PC-3 (cell line): ENCODE measurements at regions of chr7 and their contacts with region 1.

Region 1: GRCh38 chr7:121337398-121337797 is 8.6 kb downstream of the WNT16 start:
- DNase-seq: peak; percentile 56
- ATAC-seq: peak; percentile 93
- H3K4me3 ChIP-seq: no peak overlapping the region
- H3K27ac ChIP-seq: no peak overlapping the region
- H3K4me1 ChIP-seq: no peaks in the 10 kb centered on the region
- H3K27me3 ChIP-seq: peaks cover 39% of the 10 kb centered on the region
- CTCF ChIP-seq: peak; percentile 65

Region 2: DNA sequence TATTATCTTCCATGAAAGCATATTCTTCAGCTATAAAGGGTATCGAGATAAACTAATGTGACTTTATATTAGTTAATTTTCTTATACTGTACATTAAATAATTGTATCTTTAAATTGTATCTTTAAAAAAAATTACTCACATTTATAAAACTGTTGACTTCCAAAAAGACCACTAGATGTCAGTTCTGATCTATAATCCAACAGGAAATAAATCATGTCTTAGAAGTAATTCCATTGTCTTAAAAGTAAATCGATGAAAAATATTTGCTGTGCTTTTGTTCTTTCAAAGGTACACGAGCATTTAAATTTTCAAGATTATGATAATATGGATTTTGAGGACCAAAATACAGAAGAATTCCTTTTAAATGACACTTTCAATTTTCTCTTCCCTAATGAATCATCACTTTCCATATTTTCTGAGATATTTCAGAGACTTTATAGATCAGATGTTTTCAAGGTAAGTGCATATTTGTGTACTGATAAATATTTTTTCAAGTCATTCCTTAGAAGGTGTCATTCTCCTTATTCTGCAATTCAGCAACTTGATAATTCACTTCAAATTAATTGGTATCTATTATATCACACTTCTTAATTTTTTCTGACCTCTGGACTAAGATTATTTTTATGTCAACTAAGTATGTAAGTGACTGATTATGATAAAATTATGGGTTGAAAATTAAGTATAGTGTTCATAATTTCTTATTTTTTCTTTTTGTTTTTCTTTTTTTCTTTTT is 210.4 kb before region 1 on chr7:
- CTCF ChIA-PET with region 1: interaction called, 3 read pairs
- POLR2A ChIA-PET with region 1: no interaction called
- intact Hi-C with region 1: loop called (anchors 1 kb)
- DNase-seq: peak; percentile 32
- ATAC-seq: no peak
- H3K4me3 ChIP-seq: no peak overlapping the region
- H3K27ac ChIP-seq: no peak overlapping the region
- H3K4me1 ChIP-seq: no peaks in the 10 kb centered on the region
- H3K27me3 ChIP-seq: no peaks in the 10 kb centered on the region
- CTCF ChIP-seq: peak; percentile 57

Region 3: DNA sequence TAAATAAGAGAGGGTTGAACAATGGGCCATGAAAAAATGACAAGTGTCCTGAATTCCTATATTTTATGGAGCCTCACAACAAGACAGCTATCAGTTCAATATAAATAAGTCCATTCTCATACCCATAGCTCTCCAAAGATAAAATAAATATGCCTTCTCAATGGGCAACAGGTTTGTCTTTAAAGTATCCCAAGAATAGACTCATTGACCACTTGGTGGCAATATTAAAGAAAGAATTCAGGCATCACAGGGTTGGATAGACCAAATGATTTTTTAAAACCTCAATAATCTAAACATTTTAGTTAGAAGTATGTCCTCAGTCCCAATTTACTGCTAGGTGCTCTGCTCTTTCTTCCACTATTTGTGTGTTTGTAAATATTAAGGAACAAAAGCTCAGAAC is 173.7 kb before region 1 on chr7:
- CTCF ChIA-PET with region 1: no interaction called
- POLR2A ChIA-PET with region 1: no interaction called
- intact Hi-C with region 1: loop called (anchors 1 kb)
- DNase-seq: no peak
- ATAC-seq: peak; percentile 48; the same call in 1 of the 2 replicates
- H3K4me3 ChIP-seq: no peak overlapping the region
- H3K27ac ChIP-seq: no peak overlapping the region
- H3K4me1 ChIP-seq: no peaks in the 10 kb centered on the region
- H3K27me3 ChIP-seq: no peaks in the 10 kb centered on the region
- CTCF ChIP-seq: no peak; the same call in 1 of the 2 replicates